ENCODE measurements at regions of chr3 and their contacts with region 1.

Region 1: GRCh38 chr3:151086484-151087456 is 1.3 kb downstream of the MED12L start:
- DNase-seq: peak; percentile 71
- H3K4me3 ChIP-seq: peak overlapping the region; percentile 21 to 49 (median 40)
- H3K27ac ChIP-seq: no peak overlapping the region
- H3K4me1 ChIP-seq: peaks cover 13% of the 10 kb centered on the region
- H3K27me3 ChIP-seq: peaks cover 33% of the 10 kb centered on the region
- CTCF ChIP-seq: peak; percentile 17 to 66

Region 2: GRCh38 chr3:150925751-150926201 is 161.0 kb before region 1 on chr3:
- CTCF ChIA-PET with region 1: no interaction called
- dilution Hi-C with region 1: no loop called
- in situ Hi-C with region 1: no loop called
- intact Hi-C with region 1: loop called (anchors 1 kb)
- DNase-seq: peak; percentile 19
- H3K4me3 ChIP-seq: no peak overlapping the region
- H3K27ac ChIP-seq: no peak overlapping the region
- H3K4me1 ChIP-seq: no peaks in the 10 kb centered on the region
- H3K27me3 ChIP-seq: peaks cover 7% of the 10 kb centered on the region
- CTCF ChIP-seq: peak; percentile 73 to 82

Region 3: DNA sequence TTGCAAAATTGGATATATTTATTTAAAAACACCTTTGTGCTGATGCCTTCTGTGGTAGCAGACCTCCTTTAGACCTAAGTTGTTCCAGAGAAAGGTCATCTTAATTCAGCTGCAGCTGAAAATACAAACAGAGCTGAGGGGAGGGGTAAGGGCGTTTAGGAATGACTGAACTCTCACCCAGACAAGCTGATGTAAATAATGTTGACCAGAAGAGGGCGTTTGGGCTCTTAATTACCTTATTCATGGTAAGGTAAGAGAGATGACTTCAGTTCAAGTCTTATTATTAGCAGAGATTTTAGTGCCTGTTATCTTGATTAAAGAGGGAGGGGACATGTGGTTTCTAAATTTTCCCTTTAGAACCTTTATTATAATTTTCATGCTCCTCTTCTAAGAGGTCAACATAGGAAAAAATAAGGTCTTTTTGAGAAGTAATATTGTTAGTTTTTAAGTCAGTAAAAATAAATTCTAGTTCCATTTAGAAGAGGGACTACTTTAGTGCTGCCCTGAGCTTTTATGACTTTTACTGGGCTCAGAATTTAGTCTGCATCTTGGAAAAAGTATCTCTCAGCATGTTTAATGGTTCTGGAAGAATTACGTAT is 69.9 kb after region 1 on chr3:
- CTCF ChIA-PET with region 1: no interaction called
- dilution Hi-C with region 1: no loop called
- in situ Hi-C with region 1: no loop called
- intact Hi-C with region 1: no loop called
- DNase-seq: peak; percentile 47
- H3K4me3 ChIP-seq: no peak overlapping the region
- H3K27ac ChIP-seq: no peak overlapping the region
- H3K4me1 ChIP-seq: no peaks in the 10 kb centered on the region
- H3K27me3 ChIP-seq: peaks cover 3% of the 10 kb centered on the region
- CTCF ChIP-seq: peak; percentile 51 to 62

Measured in mammary epithelial cell (primary cell).